Naive thymus-derived CD4-positive, alpha-beta T cell (primary cell): ENCODE measurements at regions of chr2 and their contacts with region 1.

Region 1: DNA sequence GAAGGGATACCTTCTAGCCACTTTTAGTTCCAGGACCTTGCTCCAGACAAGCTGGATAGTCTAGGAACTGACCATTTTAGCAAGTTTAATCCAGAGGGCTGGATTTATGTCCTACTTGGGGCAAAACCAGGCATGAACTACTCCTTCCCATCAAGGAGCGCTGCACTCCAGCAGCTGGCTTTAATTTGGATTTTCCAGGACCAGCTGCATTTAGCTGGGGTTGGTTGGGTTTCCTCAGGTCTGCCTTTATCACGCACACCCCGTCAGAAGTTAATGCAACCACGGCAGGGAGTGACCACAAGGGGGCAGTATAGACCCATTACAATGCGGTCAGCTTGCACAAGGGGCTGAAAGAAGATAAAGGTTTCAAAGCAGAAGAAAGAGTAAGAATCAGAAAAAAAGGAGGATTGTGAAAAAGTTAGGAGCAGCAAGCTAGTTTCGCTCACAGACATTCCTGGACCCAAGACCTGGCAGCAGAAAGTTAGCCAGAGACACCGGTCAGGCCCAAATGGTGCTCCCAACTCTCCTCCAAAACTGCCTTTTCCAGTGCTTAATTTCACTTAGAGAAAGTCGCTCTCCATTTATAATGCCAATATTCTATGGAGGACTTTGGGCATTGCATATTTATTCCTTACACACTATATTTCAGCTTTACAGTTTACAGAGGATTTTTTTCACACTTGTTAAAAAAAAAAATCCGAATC is 40.1 kb downstream of the SLC4A1AP start:
- DNase-seq: peak; percentile 59 to 83 (median 77)
- ATAC-seq: peak; percentile 94
- H3K4me3 ChIP-seq: no peak overlapping the region
- H3K4me3 Mint-ChIP-seq: no peak overlapping the region
- H3K27ac ChIP-seq: no peak overlapping the region
- H3K27ac Mint-ChIP-seq: peak overlapping the region in 1 of 9 donors; percentile 36
- H3K4me1 ChIP-seq: no peaks in the 10 kb centered on the region
- H3K4me1 Mint-ChIP-seq: peaks cover 0 to 16% (median 4%) of the 10 kb centered on the region in 7 donors
- H3K27me3 ChIP-seq: no peaks in the 10 kb centered on the region
- H3K27me3 Mint-ChIP-seq: no peaks in the 10 kb centered on the region

Region 2: DNA sequence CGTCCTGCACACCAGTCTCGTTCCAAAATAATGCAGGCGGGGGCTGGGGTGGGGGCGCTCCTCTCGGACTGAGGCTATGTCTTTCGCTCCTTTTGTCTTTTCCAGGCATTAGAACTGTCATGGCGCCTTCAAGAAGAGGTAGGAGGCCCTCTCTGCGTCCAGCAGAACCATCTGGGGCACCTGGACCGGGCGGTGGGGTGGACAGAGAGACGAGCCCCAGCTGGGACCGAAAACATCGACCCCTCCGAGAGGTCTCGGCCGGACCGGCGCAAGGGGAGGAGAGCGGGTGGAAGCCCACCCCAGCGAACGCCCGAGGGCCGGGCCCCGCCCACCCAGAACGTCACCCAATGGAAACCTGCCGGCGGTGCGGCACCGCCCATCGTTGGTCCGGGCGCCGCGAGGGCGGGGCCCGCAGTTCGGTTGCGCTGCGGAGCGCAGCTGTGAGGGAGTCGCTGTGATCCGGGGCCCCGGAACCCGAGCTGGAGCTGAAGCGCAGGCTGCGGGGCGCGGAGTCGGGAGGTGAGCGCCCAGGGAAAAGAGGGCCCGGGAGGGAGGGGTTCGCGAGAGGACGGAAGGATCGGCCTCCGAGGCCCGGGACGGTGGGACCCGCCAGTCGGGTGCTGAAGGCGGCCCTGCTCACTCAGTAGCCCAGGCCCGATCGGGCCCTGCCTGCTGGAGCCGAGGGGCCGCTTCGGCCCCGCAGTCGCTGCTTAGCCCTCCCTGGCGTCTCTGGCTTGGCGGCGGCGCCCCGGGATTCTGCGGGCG is 275.4 kb before region 1 on chr2 and contains the start of gene NRBP1:
- CTCF ChIA-PET with region 1: no interaction called
- POLR2A ChIA-PET with region 1: no interaction called
- intact Hi-C with region 1: no loop called
- DNase-seq: peak; percentile 83 to 97 (median 88)
- ATAC-seq: peak; percentile 97
- H3K4me3 ChIP-seq: peak within 1 kb of the TSS; percentile 84
- H3K4me3 Mint-ChIP-seq: peak within 1 kb of the TSS; percentile 91 to 99 (median 98)
- H3K27ac ChIP-seq: peak within 1 kb of the TSS; percentile 94
- H3K27ac Mint-ChIP-seq: peak within 1 kb of the TSS; percentile 89 to 99 (median 97)
- H3K4me1 ChIP-seq: peaks cover 23 to 28% of the 10 kb centered on the region in 2 donors
- H3K4me1 Mint-ChIP-seq: peaks cover 32 to 48% (median 39%) of the 10 kb centered on the region in 7 donors
- H3K27me3 ChIP-seq: no peaks in the 10 kb centered on the region
- H3K27me3 Mint-ChIP-seq: peaks cover 0 to 3% (median 0%) of the 10 kb centered on the region in 5 donors
- total RNA-seq, gene NRBP1: 94.4 to 181 (median 121) TPM

Region 3: GRCh38 chr2:27689424-27689823 is 14.4 kb before region 1 on chr2:
- CTCF ChIA-PET with region 1: interaction called, 10 read pairs
- POLR2A ChIA-PET with region 1: no interaction called
- intact Hi-C with region 1: no loop called
- DNase-seq: no peak
- ATAC-seq: no peak
- H3K4me3 ChIP-seq: no peak overlapping the region
- H3K4me3 Mint-ChIP-seq: no peak overlapping the region
- H3K27ac ChIP-seq: no peak overlapping the region
- H3K27ac Mint-ChIP-seq: no peak overlapping the region
- H3K4me1 ChIP-seq: peaks cover 0 to 17% of the 10 kb centered on the region in 2 donors
- H3K4me1 Mint-ChIP-seq: peaks cover 0 to 17% (median 7%) of the 10 kb centered on the region in 7 donors
- H3K27me3 ChIP-seq: no peaks in the 10 kb centered on the region
- H3K27me3 Mint-ChIP-seq: no peaks in the 10 kb centered on the region

Region 4: DNA sequence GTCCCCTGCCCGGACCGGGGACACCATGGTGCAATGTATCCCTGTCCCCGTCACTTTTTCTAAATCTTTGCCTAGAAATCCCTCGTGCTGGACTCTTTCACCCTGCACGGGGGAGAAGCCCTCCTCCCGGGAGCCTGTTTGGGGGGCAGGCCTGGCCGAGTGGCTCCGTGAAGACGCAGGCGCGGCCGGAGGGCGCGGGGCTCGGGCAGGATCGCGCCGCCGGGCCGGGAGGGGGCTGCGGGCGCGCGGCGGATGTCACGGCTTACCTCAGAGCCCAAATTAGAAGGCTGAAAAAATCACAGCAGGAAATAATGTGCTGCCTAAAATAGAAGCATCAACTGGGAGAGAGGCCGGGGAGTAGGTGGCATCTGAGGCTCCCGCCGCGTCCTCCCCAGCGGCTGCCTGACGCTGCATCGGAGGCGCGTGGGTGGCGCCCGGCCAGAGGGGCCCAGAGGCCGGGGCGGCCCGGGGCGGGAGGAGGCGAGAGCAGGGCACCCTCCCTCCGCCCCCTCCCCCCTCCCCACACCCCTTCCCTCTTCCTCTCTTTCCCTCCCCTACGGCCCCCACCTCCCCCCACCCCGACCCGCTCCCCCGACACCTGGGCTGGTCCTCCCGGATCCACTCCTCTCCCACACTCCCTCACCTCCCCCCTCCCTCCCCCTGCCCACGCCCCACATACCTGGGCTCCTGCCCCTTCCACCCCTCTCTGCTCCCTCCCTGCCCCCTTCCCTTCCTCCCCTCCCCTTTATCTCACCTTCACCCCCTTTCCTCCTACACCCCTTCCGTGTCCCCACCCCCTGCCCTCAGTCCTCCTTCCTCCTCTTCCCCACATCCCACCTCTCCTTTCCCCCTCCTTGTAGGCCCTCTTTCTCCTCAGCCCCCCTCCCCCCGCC is 11.8 kb after region 1 on chr2:
- CTCF ChIA-PET with region 1: interaction called, 5 read pairs
- POLR2A ChIA-PET with region 1: no interaction called
- intact Hi-C with region 1: loop called in 1 of 2 experiments (anchors 1 kb)
- DNase-seq: peak; percentile 22 to 66 (median 54)
- ATAC-seq: peak; percentile 73
- H3K4me3 ChIP-seq: peak overlapping the region; percentile 48
- H3K4me3 Mint-ChIP-seq: peak overlapping the region in 8 of 10 donors; percentile 52 to 79 (median 62)
- H3K27ac ChIP-seq: no peak overlapping the region
- H3K27ac Mint-ChIP-seq: no peak overlapping the region
- H3K4me1 ChIP-seq: peaks cover 3 to 19% of the 10 kb centered on the region in 2 donors
- H3K4me1 Mint-ChIP-seq: peaks cover 15 to 33% (median 23%) of the 10 kb centered on the region in 7 donors
- H3K27me3 ChIP-seq: no peaks in the 10 kb centered on the region
- H3K27me3 Mint-ChIP-seq: peaks cover 9 to 21% (median 12%) of the 10 kb centered on the region in 5 donors